T-cell (primary cell): ENCODE measurements at regions of chr4 and their contacts with region 1.

Region 1: DNA sequence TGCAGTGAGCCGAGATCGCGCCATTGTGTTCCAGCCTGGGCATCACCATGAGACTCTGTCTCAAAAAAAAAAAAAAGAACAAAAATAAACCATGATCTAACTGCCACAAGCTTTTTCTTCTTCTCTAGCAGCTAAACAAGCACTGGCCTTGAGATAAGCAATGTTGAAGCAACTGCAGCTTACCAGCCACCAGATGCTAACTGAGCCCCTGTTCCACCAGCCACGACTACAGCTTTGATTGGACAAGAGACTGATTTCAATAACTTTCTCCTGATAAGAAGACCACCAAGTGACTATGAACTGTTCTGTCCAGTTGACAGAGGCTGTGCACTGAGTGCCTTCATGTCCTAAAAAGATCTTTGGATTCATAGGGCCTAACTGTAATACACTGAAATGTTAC is 58.5 kb downstream of the DCTD start:
- DNase-seq: no peak
- ATAC-seq: no peak
- H3K4me3 ChIP-seq: no peak overlapping the region
- H3K4me3 Mint-ChIP-seq: no peak overlapping the region
- H3K27ac ChIP-seq: no peak overlapping the region
- H3K27ac Mint-ChIP-seq: no peak overlapping the region
- H3K4me1 ChIP-seq: no peaks in the 10 kb centered on the region
- H3K4me1 Mint-ChIP-seq: no peaks in the 10 kb centered on the region
- H3K27me3 ChIP-seq: peaks cover 0 to 7% of the 10 kb centered on the region in 2 experiments
- H3K27me3 Mint-ChIP-seq: no peaks in the 10 kb centered on the region

Region 2: GRCh38 chr4:182829196-182829595 is 29.5 kb before region 1 on chr4:
- CTCF ChIA-PET with region 1: interaction called in 1 of 2 experiments, 12 read pairs
- POLR2A ChIA-PET with region 1: no interaction called
- DNase-seq: no peak
- ATAC-seq: no peak
- H3K4me3 ChIP-seq: no peak overlapping the region
- H3K4me3 Mint-ChIP-seq: no peak overlapping the region
- H3K27ac ChIP-seq: no peak overlapping the region
- H3K27ac Mint-ChIP-seq: no peak overlapping the region
- H3K4me1 ChIP-seq: peaks cover 0 to 3% of the 10 kb centered on the region in 2 experiments
- H3K4me1 Mint-ChIP-seq: peaks cover 0 to 7% (median 6%) of the 10 kb centered on the region in 3 donors
- H3K27me3 ChIP-seq: peaks cover 0 to 34% of the 10 kb centered on the region in 2 experiments
- H3K27me3 Mint-ChIP-seq: peaks cover 8 to 38% of the 10 kb centered on the region in 2 donors